Astrocyte of the cerebellum (primary cell): ENCODE measurements at regions of chr12 and their contacts with region 1.

Region 1: DNA sequence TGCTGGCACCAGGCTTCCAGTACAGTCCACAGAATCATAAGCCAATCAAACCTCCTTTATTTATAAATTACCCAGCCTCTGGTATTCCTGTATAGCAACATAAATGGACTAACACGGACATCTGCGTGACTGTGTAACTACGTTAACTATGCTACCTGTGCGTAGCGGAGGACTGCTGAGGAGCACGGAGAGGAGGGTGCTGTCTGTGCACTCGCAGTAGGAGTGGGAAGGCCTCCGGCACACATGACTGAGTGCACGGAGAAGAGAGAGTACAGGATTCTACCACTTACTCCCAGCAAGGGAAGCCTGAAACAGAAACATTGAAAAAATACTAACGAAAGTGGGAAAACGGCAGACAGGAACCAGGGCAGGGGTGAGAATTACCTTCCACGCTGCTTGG is 22.9 kb downstream of the RAD52 start:
- DNase-seq: no peak
- H3K4me3 ChIP-seq: no peak overlapping the region
- CTCF ChIP-seq: no peak

Region 2: DNA sequence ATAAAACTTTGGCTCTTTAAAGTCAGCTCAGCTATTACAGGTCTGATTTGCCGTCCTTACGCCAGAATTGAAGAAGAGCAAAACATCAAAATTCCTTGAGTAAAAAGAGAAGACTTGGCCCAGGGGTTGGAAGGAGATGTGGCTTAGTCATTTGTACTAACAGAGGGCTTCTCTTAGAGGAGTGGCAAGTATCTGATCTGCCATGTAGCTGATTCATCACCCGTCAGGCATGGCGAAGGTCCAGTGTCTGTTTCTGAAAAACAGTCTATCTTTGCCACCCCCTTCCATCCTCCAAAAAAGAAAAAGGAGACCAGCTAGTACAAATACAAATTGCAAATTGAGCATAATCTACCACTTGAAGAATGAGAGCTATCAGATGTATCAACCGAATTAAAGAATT is 69.0 kb before region 1 on chr12:
- in situ Hi-C with region 1: loop called (anchors 5 kb)
- DNase-seq: no peak
- H3K4me3 ChIP-seq: no peak overlapping the region
- CTCF ChIP-seq: no peak

Region 3: GRCh38 chr12:1030779-1031178 is 104.1 kb after region 1 on chr12:
- in situ Hi-C with region 1: no loop called
- DNase-seq: no peak
- H3K4me3 ChIP-seq: no peak overlapping the region
- CTCF ChIP-seq: no peak